ENCODE measurements at regions of chr2 and their contacts with region 1.

Region 1: GRCh38 chr2:130342533-130343275 is at the start of gene IMP4:
- DNase-seq: peak; percentile 98 to 99
- H3K4me3 ChIP-seq: peak within 1 kb of the TSS; percentile 82 to 92
- H3K27ac ChIP-seq: peak within 1 kb of the TSS; percentile 90 to 97
- H3K4me1 ChIP-seq: peaks cover 3 to 16% of the 10 kb centered on the region in 2 donors
- H3K27me3 ChIP-seq: no peaks in the 10 kb centered on the region
- CTCF ChIP-seq: peak; percentile 9 to 36 (median 16)
- total RNA-seq, gene IMP4: 97.9 TPM

Region 2: DNA sequence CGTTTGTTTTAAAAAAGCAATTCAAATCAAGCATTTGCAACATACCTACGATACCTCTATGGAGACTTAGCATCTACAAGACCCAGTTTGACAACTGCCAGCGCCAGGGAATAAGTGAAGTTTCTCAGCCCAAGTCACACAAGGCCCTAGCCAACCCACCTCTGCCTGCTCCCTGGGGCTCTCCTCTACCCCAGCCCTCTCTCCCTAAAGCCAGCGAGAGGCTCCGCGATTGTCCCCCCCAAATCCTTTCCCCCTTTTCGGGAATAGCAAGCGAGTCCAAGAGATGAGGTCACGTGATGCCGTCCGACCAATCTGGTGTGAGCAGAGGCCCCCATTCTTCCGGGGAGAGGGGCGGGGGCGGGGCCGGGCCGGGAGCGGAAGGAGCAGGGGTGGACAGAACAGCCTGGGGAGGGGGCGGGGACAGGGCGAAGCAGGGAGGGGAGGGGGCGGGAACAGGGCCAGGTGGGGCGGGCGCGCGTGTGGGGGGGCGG is 465.4 kb before region 1 on chr2:
- intact Hi-C with region 1: loop called (anchors 5 kb)
- DNase-seq: peak; percentile 81 to 95
- H3K4me3 ChIP-seq: peak overlapping the region; percentile 82 to 86
- H3K27ac ChIP-seq: peak overlapping the region; percentile 75 to 80
- H3K4me1 ChIP-seq: peaks cover 0 to 11% of the 10 kb centered on the region in 2 donors
- H3K27me3 ChIP-seq: no peaks in the 10 kb centered on the region
- CTCF ChIP-seq: no peak

Region 3: GRCh38 chr2:130252880-130253645 is 89.6 kb before region 1 on chr2:
- intact Hi-C with region 1: no loop called
- DNase-seq: no peak
- H3K4me3 ChIP-seq: peak overlapping the region in 1 of 2 donors; percentile 36
- H3K27ac ChIP-seq: no peak overlapping the region
- H3K4me1 ChIP-seq: no peaks in the 10 kb centered on the region
- H3K27me3 ChIP-seq: no peaks in the 10 kb centered on the region
- CTCF ChIP-seq: no peak

Region 4: GRCh38 chr2:130355578-130356431 is 13.1 kb after region 1 on chr2 and contains the start of gene PTPN18:
- intact Hi-C with region 1: loop called (anchors 1 kb)
- DNase-seq: peak; percentile 53 to 95
- H3K4me3 ChIP-seq: peak within 1 kb of the TSS; percentile 57 to 78
- H3K27ac ChIP-seq: peak within 1 kb of the TSS; percentile 58 to 74
- H3K4me1 ChIP-seq: peaks cover 6 to 15% of the 10 kb centered on the region in 2 donors
- H3K27me3 ChIP-seq: no peaks in the 10 kb centered on the region
- CTCF ChIP-seq: peak; percentile 43 to 79 (median 59)
- total RNA-seq, gene PTPN18: 21.0 TPM

Region 5: DNA sequence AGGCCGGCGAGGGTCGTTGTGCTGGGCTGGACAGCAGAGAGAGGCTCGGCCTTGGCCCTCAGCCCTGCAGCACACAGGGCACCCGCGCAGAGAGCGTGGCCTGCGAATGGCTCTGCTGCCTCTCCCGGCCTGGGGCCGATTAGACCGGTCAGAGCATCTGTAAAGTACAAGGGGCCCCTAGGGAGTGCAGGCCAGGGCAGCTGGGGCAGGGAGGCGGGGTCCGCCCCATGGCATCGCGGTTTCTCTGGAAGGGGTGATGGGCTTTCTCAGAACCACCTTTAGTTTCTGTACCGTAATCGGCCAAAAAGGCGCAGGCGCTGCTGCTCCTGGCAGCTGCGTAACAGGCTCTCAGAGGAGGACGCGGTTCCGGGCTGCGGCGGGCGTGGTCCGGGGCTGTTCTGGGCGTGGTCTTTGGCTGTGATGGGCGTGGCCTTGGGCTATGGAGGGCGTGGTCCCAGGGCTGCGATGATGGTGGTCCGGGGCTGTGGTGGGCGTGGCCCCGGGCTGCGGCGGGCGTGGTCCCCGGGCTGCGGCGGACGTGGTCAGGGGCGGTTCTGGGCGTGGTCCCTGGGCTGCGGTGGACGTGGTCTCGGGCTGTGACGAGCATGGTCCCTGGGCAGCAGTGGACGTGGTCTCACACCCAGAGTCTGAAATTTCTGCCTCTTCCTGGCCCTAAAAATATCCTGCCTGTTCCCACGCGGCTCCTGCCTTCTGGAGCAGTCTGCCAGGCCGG is 384.7 kb after region 1 on chr2:
- intact Hi-C with region 1: loop called (anchors 5 kb)
- DNase-seq: peak; percentile 46 to 91
- H3K4me3 ChIP-seq: peak overlapping the region; percentile 64 to 67
- H3K27ac ChIP-seq: peak overlapping the region; percentile 73 to 86
- H3K4me1 ChIP-seq: peaks cover 7 to 15% of the 10 kb centered on the region in 2 donors
- H3K27me3 ChIP-seq: no peaks in the 10 kb centered on the region
- CTCF ChIP-seq: no peak

Region 6: GRCh38 chr2:131105156-131105949 is 762.6 kb after region 1 on chr2 and contains the start of gene PLEKHB2:
- intact Hi-C with region 1: loop called (anchors 5 kb)
- DNase-seq: peak; percentile 64 to 96
- H3K4me3 ChIP-seq: peak within 1 kb of the TSS; percentile 83 to 97
- H3K27ac ChIP-seq: peak within 1 kb of the TSS; percentile 85 to 86
- H3K4me1 ChIP-seq: peaks cover 0 to 14% of the 10 kb centered on the region in 2 donors
- H3K27me3 ChIP-seq: no peaks in the 10 kb centered on the region
- CTCF ChIP-seq: peak in 1 of 3 experiments; percentile 13
- total RNA-seq, gene PLEKHB2: 61.7 TPM

Measured in ascending aorta (tissue), 2 donors.